Mammary epithelial cell (primary cell): ENCODE measurements at regions of chr7 and their contacts with region 1.

Region 1: DNA sequence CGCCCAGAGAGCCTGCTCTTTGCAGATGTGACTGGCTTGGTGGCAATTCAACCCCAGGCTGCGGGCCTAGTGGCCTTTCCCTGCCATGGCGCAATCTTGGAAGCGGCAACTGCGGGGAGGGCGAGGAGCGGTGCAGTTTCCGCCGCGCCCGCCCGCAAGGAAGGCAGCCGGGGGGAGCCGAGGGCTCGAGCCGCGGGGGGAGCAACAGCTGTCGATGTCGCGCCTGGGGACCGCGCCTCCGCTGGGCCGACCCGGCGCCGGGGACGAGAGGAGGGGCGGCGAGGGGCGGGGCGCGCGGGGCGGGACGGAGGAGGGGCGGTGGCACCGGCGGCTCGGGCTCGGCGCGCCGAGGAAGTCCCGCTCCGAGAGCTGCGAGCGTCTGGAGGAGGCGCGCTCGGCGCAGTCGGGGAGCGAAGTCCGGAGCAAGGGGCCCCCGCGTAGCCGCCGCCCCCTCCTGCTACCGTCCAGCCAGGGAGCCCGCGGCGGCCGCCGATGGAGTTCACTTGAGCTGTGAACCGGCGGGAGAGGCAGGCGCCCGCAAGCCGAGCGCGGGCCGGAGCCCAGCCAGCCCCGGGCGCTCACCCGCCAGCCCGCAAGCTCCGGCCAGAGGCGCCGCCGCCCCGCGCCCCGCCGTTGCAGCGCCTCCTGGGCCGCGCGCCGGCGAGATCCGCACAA is 438.1 kb upstream of the GALNT17 start:
- DNase-seq: peak; percentile 58
- H3K4me3 ChIP-seq: peak overlapping the region; percentile 48 to 93 (median 85)
- H3K27ac ChIP-seq: peak overlapping the region; percentile 20
- H3K4me1 ChIP-seq: peaks cover 3% of the 10 kb centered on the region
- H3K27me3 ChIP-seq: no peaks in the 10 kb centered on the region
- CTCF ChIP-seq: no peak

Region 2: GRCh38 chr7:70183278-70183677 is 510.5 kb before region 1 on chr7:
- CTCF ChIA-PET with region 1: no interaction called
- dilution Hi-C with region 1: no loop called
- in situ Hi-C with region 1: loop called (anchors 10 to 25 kb)
- intact Hi-C with region 1: no loop called
- DNase-seq: no peak
- H3K4me3 ChIP-seq: no peak overlapping the region
- H3K27ac ChIP-seq: no peak overlapping the region
- H3K4me1 ChIP-seq: no peaks in the 10 kb centered on the region
- H3K27me3 ChIP-seq: no peaks in the 10 kb centered on the region
- CTCF ChIP-seq: no peak

Region 3: GRCh38 chr7:70325509-70326101 is 368.2 kb before region 1 on chr7:
- CTCF ChIA-PET with region 1: no interaction called
- dilution Hi-C with region 1: no loop called
- in situ Hi-C with region 1: no loop called
- intact Hi-C with region 1: loop called (anchors 10 kb)
- DNase-seq: peak; percentile 76
- H3K4me3 ChIP-seq: no peak overlapping the region
- H3K27ac ChIP-seq: peak overlapping the region; percentile 12
- H3K4me1 ChIP-seq: peaks cover 25% of the 10 kb centered on the region
- H3K27me3 ChIP-seq: no peaks in the 10 kb centered on the region
- CTCF ChIP-seq: no peak

Region 4: GRCh38 chr7:70480927-70481569 is 212.8 kb before region 1 on chr7:
- CTCF ChIA-PET with region 1: no interaction called
- dilution Hi-C with region 1: no loop called
- in situ Hi-C with region 1: no loop called
- intact Hi-C with region 1: loop called (anchors 10 kb)
- DNase-seq: peak; percentile 96
- H3K4me3 ChIP-seq: no peak overlapping the region
- H3K27ac ChIP-seq: no peak overlapping the region
- H3K4me1 ChIP-seq: peaks cover 29% of the 10 kb centered on the region
- H3K27me3 ChIP-seq: no peaks in the 10 kb centered on the region
- CTCF ChIP-seq: no peak

Region 5: GRCh38 chr7:70595753-70596597 is 97.8 kb before region 1 on chr7:
- CTCF ChIA-PET with region 1: no interaction called
- dilution Hi-C with region 1: no loop called
- in situ Hi-C with region 1: loop called (anchors 10 to 25 kb)
- intact Hi-C with region 1: loop called (anchors 1 kb)
- DNase-seq: peak; percentile 42
- H3K4me3 ChIP-seq: peak overlapping the region; percentile 52 to 62 (median 53)
- H3K27ac ChIP-seq: peak overlapping the region; percentile 20
- H3K4me1 ChIP-seq: peaks cover 36% of the 10 kb centered on the region
- H3K27me3 ChIP-seq: no peaks in the 10 kb centered on the region
- CTCF ChIP-seq: no peak